ENCODE measurements at regions of chrX and their contacts with region 1.

Region 1: DNA sequence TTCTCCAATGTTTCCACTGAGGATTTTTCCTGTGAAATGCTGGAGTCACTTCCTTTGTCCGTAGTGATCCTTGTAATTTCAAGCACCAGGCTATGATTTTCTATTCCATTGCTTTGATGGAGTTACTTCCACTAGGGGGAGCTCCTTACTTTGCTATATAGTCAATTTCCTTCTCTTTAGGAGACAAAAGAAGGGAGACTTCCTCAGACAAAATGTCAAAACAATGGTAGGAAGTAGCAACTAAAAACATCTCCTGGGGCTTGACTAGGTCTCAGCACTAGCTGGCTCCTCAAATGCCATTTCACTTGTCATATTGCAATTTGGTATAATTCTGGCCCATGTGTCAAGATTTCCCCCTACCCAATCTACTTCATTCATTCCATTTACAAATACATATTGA is 24.1 kb downstream of the ZCCHC12 start:
- DNase-seq: peak in 1 of 2 donors; percentile 69
- ATAC-seq: peak in 1 of 3 donors; percentile 61
- H3K4me3 ChIP-seq: no peak overlapping the region
- H3K4me3 Mint-ChIP-seq: no peak overlapping the region
- H3K27ac ChIP-seq: no peak overlapping the region
- H3K27ac Mint-ChIP-seq: no peak overlapping the region
- H3K4me1 ChIP-seq: no peaks in the 10 kb centered on the region
- H3K4me1 Mint-ChIP-seq: no peaks in the 10 kb centered on the region
- H3K27me3 ChIP-seq: no peaks in the 10 kb centered on the region
- H3K27me3 Mint-ChIP-seq: peaks cover 2 to 14% of the 10 kb centered on the region in 2 donors
- CTCF ChIP-seq: peak; percentile 57

Region 2: GRCh38 chrX:118884552-118885138 is 37.0 kb after region 1 on chrX:
- intact Hi-C with region 1: no loop called
- DNase-seq: no peak
- ATAC-seq: no peak
- H3K4me3 ChIP-seq: no peak overlapping the region
- H3K4me3 Mint-ChIP-seq: no peak overlapping the region
- H3K27ac ChIP-seq: no peak overlapping the region
- H3K27ac Mint-ChIP-seq: no peak overlapping the region
- H3K4me1 ChIP-seq: no peaks in the 10 kb centered on the region
- H3K4me1 Mint-ChIP-seq: no peaks in the 10 kb centered on the region
- H3K27me3 ChIP-seq: no peaks in the 10 kb centered on the region
- H3K27me3 Mint-ChIP-seq: peaks cover 14 to 34% of the 10 kb centered on the region in 2 donors
- CTCF ChIP-seq: no peak

Region 3: GRCh38 chrX:119008118-119008744 is 160.6 kb after region 1 on chrX:
- intact Hi-C with region 1: loop called (anchors 1 kb)
- DNase-seq: peak in 1 of 2 donors; percentile 53
- ATAC-seq: peak in 2 of 3 donors; percentile 47 to 49
- H3K4me3 ChIP-seq: no peak overlapping the region
- H3K4me3 Mint-ChIP-seq: no peak overlapping the region
- H3K27ac ChIP-seq: no peak overlapping the region
- H3K27ac Mint-ChIP-seq: no peak overlapping the region
- H3K4me1 ChIP-seq: no peaks in the 10 kb centered on the region
- H3K4me1 Mint-ChIP-seq: no peaks in the 10 kb centered on the region
- H3K27me3 ChIP-seq: no peaks in the 10 kb centered on the region
- H3K27me3 Mint-ChIP-seq: peaks cover 0 to 4% of the 10 kb centered on the region in 2 donors
- CTCF ChIP-seq: peak; percentile 49

Region 4: DNA sequence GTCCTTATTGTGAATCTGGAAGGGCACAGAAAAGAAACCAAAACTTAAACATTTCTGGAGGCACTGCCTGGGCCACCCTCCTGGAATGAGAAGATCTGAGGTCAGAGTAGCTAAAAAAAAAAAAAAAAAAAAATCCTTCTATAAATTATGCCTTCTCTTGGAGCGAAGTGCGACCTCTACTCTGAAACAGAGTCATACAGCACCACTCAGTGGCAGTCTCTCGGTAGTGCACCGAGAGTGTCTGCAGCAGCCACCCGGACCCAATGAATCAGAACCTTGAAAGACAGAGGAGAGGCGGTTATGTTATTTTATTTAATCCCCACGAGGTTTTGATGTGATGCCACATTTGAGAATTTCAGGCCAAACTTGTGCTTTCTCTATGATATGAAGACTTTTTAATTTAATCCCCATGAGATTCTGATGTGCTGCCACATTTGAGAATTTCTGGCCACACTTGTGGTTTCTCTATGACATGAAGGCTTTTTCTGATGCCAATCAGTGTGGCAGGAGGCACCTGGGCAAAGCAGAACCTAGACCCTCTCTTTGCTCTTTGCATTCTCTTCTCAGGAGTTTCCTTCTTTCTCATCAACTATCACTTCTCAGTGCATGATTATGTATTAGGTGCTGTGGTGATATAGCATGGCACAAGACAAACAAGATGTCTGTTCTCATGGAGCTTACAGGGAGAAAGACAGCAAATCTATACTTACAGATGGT is 219.5 kb after region 1 on chrX:
- intact Hi-C with region 1: loop called (anchors 1 kb)
- DNase-seq: peak in 1 of 2 donors; percentile 51
- ATAC-seq: peak in 2 of 3 donors; percentile 40 to 65
- H3K4me3 ChIP-seq: no peak overlapping the region
- H3K4me3 Mint-ChIP-seq: no peak overlapping the region
- H3K27ac ChIP-seq: no peak overlapping the region
- H3K27ac Mint-ChIP-seq: no peak overlapping the region
- H3K4me1 ChIP-seq: no peaks in the 10 kb centered on the region
- H3K4me1 Mint-ChIP-seq: no peaks in the 10 kb centered on the region
- H3K27me3 ChIP-seq: no peaks in the 10 kb centered on the region
- H3K27me3 Mint-ChIP-seq: no peaks in the 10 kb centered on the region
- CTCF ChIP-seq: peak; percentile 19

Measured in natural killer cell (primary cell).